ENCODE measurements at regions of chr16 and their contacts with region 1.

Region 1: GRCh38 chr16:21708533-21709115 is 44.9 kb downstream of the OTOA start:
- DNase-seq: peak; percentile 78
- CTCF ChIP-seq: peak; percentile 69

Region 2: DNA sequence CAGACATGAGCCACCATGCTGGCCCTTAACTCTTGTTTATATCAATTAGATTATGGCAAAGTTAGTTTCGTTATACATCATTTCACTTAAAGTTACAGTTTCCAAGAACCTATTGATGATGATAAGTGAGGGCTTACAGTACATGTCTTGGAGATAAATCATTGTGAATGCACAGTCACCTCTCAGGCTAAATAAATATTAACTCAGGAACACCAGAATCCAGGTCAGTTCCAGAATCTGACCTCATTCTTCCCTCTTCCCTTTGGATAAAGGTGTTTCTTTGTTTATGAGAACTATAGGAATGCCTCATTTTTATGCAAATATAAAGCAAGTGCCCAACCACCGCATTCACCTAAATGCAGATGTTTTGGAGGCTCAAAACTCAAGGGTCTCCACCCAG is 382.2 kb before region 1 on chr16:
- CTCF ChIA-PET with region 1: no interaction called
- POLR2A ChIA-PET with region 1: no interaction called
- DNase-seq: no peak
- CTCF ChIP-seq: no peak

Region 3: GRCh38 chr16:21584817-21585216 is 123.8 kb before region 1 on chr16:
- CTCF ChIA-PET with region 1: interaction called, 29 read pairs
- POLR2A ChIA-PET with region 1: no interaction called
- DNase-seq: no peak
- CTCF ChIP-seq: no peak

Region 4: DNA sequence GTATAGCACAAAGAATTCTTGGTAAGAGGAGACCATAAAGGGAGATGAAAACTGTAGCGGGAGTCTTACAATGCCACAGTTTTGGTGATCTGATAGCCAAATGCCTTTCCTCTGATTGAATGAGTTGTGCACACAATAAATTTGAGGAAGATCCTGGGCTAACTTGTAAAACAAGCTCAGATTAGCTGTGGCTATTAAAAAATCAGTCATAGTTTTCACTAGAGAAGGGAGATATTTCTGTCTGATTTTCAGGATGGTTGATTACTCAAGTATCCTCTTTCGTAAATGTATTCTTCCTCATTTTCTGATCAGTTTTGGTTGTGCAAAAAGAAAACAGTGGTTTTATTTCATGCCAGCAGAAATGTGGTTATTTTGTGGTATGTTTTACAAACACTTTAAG is 118.3 kb before region 1 on chr16:
- CTCF ChIA-PET with region 1: interaction called, 12 read pairs
- POLR2A ChIA-PET with region 1: no interaction called
- DNase-seq: no peak
- CTCF ChIP-seq: no peak

Region 5: GRCh38 chr16:21719283-21719682 is 10.7 kb after region 1 on chr16:
- CTCF ChIA-PET with region 1: interaction called, 49 read pairs
- POLR2A ChIA-PET with region 1: no interaction called
- DNase-seq: no peak
- CTCF ChIP-seq: no peak

Measured in GM10248 (cell line).